Ascending aorta (tissue), 2 donors: ENCODE measurements at regions of chr15 and their contacts with region 1.

Region 1: GRCh38 chr15:71800835-71801745 is 9.3 kb upstream of the NR2E3 start:
- DNase-seq: no peak
- H3K4me3 ChIP-seq: no peak overlapping the region
- H3K27ac ChIP-seq: no peak overlapping the region
- H3K4me1 ChIP-seq: no peaks in the 10 kb centered on the region
- H3K27me3 ChIP-seq: no peaks in the 10 kb centered on the region
- CTCF ChIP-seq: peak; percentile 81 to 89 (median 81)

Region 2: GRCh38 chr15:70892002-70892914 is 908.8 kb before region 1 on chr15 and contains the starts of genes LRRC49 and THAP10:
- intact Hi-C with region 1: loop called (anchors 5 kb)
- DNase-seq: peak; percentile 35 to 94
- H3K4me3 ChIP-seq: peak within 1 kb of the TSS; percentile 64 to 81
- H3K27ac ChIP-seq: peak within 1 kb of the TSS; percentile 79 to 80
- H3K4me1 ChIP-seq: peaks cover 0 to 7% of the 10 kb centered on the region in 2 donors
- H3K27me3 ChIP-seq: no peaks in the 10 kb centered on the region
- CTCF ChIP-seq: no peak
- total RNA-seq, gene LRRC49: 23.1 TPM
- total RNA-seq, gene THAP10: 3.1 TPM

Region 3: GRCh38 chr15:71109130-71109529 is 692.0 kb before region 1 on chr15:
- intact Hi-C with region 1: loop called (anchors 5 kb)
- DNase-seq: no peak
- H3K4me3 ChIP-seq: no peak overlapping the region
- H3K27ac ChIP-seq: peak overlapping the region; percentile 51 to 66
- H3K4me1 ChIP-seq: peaks cover 0 to 11% of the 10 kb centered on the region in 2 donors
- H3K27me3 ChIP-seq: no peaks in the 10 kb centered on the region
- CTCF ChIP-seq: peak; percentile 32 to 38 (median 32)

Region 4: GRCh38 chr15:71448688-71449114 is 352.4 kb before region 1 on chr15:
- intact Hi-C with region 1: loop called (anchors 1 kb)
- DNase-seq: peak in 1 of 2 donors; percentile 70
- H3K4me3 ChIP-seq: no peak overlapping the region
- H3K27ac ChIP-seq: no peak overlapping the region
- H3K4me1 ChIP-seq: peaks cover 0 to 5% of the 10 kb centered on the region in 2 donors
- H3K27me3 ChIP-seq: no peaks in the 10 kb centered on the region
- CTCF ChIP-seq: peak; percentile 87 to 91 (median 88)

Region 5: GRCh38 chr15:71743861-71744382 is 57.2 kb before region 1 on chr15:
- intact Hi-C with region 1: loop called (anchors 1 kb)
- DNase-seq: peak in 1 of 2 donors; percentile 75
- H3K4me3 ChIP-seq: no peak overlapping the region
- H3K27ac ChIP-seq: peak overlapping the region in 1 of 2 donors; percentile 60
- H3K4me1 ChIP-seq: peaks cover 0 to 8% of the 10 kb centered on the region in 2 donors
- H3K27me3 ChIP-seq: no peaks in the 10 kb centered on the region
- CTCF ChIP-seq: peak; percentile 39 to 70 (median 62)

Region 6: DNA sequence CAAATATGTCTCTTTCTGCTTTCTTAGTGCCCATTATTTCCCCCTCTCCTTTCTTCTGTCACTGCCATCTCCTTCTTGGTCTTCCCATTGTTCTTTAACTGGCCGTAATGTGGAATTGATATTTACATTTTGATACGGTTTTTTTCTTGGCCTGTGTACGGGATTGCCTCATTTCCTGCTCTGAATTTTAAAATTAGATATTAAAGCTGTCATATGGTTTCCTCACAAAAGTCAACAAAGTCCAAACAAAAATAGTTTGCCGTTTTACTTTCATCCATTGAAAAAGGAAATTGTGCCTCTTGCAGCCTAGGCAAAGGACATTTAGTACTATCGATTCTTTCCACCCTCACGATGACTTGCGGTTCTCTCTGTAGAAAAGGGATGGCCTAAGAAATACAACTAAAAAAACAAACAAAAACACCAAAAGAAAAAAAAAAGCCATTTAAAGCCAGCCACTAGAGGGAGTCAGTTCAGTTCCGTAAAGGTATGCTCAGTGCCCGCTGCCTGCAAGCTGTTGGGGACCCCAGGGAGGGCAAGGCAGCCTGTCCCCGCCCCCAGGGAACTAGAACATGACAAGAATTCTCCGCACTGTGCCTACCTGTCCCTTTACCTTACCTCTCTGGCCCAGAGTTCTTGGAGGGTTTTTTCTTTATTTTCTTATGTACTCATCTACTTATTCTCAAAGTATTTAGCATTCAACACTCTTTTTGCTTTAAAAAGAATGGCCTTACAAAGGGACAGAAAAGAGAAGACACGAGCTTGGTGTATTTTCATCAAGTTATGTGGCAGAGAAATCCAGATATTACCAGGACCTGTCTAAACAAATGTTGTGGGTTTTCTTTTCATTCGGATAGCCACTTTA is 20.7 kb before region 1 on chr15:
- intact Hi-C with region 1: loop called (anchors 1 kb)
- DNase-seq: peak in 1 of 2 donors; percentile 73
- H3K4me3 ChIP-seq: peak overlapping the region; percentile 6 to 10
- H3K27ac ChIP-seq: peak overlapping the region; percentile 75 to 85
- H3K4me1 ChIP-seq: peaks cover 10 to 38% of the 10 kb centered on the region in 2 donors
- H3K27me3 ChIP-seq: no peaks in the 10 kb centered on the region
- CTCF ChIP-seq: peak; percentile 30 to 73 (median 72)

Region 7: GRCh38 chr15:72020799-72021198 is 219.7 kb after region 1 on chr15:
- intact Hi-C with region 1: no loop called
- DNase-seq: no peak
- H3K4me3 ChIP-seq: no peak overlapping the region
- H3K27ac ChIP-seq: no peak overlapping the region
- H3K4me1 ChIP-seq: no peaks in the 10 kb centered on the region
- H3K27me3 ChIP-seq: no peaks in the 10 kb centered on the region
- CTCF ChIP-seq: no peak

Region 8: DNA sequence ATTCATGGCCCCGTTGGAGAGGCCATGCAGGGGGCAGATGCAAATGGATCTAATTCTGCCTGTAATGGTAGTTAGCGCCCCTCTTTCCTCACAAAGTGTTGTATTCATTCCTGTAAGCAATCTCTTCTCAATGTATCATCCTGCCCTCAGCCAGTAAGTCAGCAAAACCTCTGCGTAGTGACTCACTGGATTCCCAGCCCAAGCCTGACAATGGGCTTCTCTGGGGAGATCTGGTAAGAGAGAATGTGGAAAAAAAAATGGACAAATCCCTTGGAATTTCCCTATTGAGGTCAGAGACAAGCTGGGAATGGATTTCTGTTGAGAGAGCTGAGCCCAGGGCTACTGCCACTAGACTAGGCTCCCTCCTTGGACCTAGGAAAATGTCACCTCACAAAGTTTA is 957.1 kb after region 1 on chr15:
- intact Hi-C with region 1: no loop called
- DNase-seq: no peak
- H3K4me3 ChIP-seq: no peak overlapping the region
- H3K27ac ChIP-seq: no peak overlapping the region
- H3K4me1 ChIP-seq: no peaks in the 10 kb centered on the region
- H3K27me3 ChIP-seq: no peaks in the 10 kb centered on the region
- CTCF ChIP-seq: no peak